HAP-1 (cell line): ENCODE measurements at regions of chr3 and their contacts with region 1.

Region 1: DNA sequence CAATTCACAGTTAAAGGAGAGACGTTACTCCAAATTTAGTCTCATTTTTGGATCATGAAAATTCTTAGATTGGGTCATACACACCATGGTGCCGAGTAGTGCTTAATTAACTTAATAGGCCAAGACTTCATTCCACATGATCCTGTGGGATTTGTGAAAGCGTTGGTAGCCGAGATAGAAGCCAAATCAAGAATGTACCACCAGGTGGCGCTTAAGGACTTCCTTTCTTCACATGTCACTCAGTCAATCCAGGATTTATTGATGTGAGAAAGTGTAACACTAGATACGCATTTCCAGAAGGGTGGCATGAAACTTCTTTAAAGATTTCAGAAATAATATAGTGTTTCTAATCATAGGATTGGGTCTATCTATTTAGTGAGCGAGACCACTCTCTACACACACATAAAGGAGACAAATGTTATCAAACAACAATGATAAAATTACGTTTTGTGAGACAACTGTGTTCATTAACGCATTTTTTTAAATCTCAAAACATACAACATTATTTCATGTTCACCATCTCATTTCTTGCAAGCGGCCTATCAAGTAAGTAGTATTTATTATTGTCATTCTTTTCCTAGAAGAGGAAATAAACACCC is 436.1 kb downstream of the CHL1 start:
- DNase-seq: peak; percentile 60 to 81
- H3K4me3 ChIP-seq: no peak overlapping the region
- H3K4me1 ChIP-seq: no peaks in the 10 kb centered on the region; the same call in 1 of the 2 replicates
- H3K27me3 ChIP-seq: peaks cover 7% of the 10 kb centered on the region

Region 2: GRCh38 chr3:140748-141330 is 491.8 kb before region 1 on chr3:
- in situ Hi-C with region 1: no loop called
- DNase-seq: peak; percentile 75 to 94
- H3K4me3 ChIP-seq: no peak overlapping the region
- H3K4me1 ChIP-seq: peaks cover 36% of the 10 kb centered on the region
- H3K27me3 ChIP-seq: no peaks in the 10 kb centered on the region

Region 3: DNA sequence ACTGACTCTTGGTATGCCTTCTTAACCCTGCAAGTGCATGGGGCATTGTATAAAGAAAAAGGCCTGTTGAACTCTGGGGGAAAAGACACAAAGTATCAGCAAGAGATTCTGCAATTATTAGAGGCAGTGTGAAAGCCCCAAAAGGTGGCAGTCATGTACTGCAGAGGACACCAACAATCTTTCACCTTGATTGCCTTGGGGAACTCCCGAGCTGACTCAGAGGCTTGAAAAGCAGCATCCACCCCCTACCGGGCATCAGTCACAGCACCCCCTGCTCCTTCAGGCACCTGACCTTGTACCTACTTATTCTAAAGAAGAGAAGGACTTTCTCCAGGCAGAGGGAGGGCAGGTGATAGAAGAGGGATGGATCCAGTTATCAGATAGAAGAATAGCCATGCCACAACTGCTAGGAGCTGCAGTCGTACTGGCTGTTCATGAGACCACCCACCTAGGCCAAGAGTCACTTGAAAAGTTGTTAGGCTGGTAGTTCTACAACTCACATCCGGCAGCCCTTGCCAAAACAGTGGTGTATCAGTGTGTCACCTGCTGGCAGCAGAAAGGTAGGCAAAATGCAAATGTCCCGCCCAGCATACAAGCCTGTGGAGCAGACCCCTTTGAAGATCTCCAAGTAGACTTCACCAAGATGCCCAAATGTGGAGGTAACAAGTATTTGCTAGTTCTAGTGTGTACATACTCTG is 218.6 kb after region 1 on chr3:
- in situ Hi-C with region 1: loop called (anchors 25 kb)
- DNase-seq: no peak
- H3K4me3 ChIP-seq: no peak overlapping the region
- H3K4me1 ChIP-seq: no peaks in the 10 kb centered on the region
- H3K27me3 ChIP-seq: no peaks in the 10 kb centered on the region

Region 4: DNA sequence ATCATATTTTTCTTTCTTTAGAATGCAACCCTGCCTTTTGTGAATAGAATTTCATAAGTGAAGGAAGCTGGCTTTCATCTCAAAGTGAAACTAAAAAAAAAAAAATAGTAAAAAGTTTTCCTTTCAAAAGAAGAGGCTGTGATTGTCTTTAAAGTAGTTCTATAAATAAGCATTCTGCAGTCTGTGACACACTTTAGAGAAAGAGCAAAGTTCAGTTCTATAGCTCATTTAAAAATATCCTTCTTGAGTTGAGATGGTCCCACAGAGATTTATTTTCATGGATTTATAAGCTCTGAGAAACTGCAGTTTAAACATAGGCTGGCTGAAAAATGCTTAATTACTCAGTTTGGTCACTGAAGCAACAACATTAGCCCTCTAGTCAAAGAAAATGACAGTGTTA is 424.1 kb after region 1 on chr3:
- in situ Hi-C with region 1: no loop called
- DNase-seq: no peak
- H3K4me3 ChIP-seq: no peak overlapping the region
- H3K4me1 ChIP-seq: no peaks in the 10 kb centered on the region
- H3K27me3 ChIP-seq: 0 out of 2 replicates have a peak, but pooled peaks cover 2% of the 10 kb centered on the region